ENCODE measurements at regions of chr4 and their contacts with region 1.

Region 1: GRCh38 chr4:128809477-128810330 is at the start of gene JADE1:
- DNase-seq: peak; percentile 82 to 83 (median 83)
- H3K4me3 ChIP-seq: peak within 1 kb of the TSS; percentile 63 to 99 (median 99)
- H3K4me3 Mint-ChIP-seq: peak within 1 kb of the TSS; percentile 97 to 99
- H3K27ac ChIP-seq: peak within 1 kb of the TSS; percentile 64 to 74
- H3K27ac Mint-ChIP-seq: peak within 1 kb of the TSS; percentile 82 to 97 (median 91)
- H3K4me1 ChIP-seq: peaks cover 19 to 31% of the 10 kb centered on the region in 2 donors
- H3K4me1 Mint-ChIP-seq: peaks cover 23% of the 10 kb centered on the region
- H3K27me3 ChIP-seq: no peaks in the 10 kb centered on the region
- H3K27me3 Mint-ChIP-seq: no peaks in the 10 kb centered on the region
- CTCF ChIP-seq: peak; percentile 55
- polyA plus RNA-seq, gene JADE1: 7.3 to 12.8 (median 12.3) TPM

Region 2: DNA sequence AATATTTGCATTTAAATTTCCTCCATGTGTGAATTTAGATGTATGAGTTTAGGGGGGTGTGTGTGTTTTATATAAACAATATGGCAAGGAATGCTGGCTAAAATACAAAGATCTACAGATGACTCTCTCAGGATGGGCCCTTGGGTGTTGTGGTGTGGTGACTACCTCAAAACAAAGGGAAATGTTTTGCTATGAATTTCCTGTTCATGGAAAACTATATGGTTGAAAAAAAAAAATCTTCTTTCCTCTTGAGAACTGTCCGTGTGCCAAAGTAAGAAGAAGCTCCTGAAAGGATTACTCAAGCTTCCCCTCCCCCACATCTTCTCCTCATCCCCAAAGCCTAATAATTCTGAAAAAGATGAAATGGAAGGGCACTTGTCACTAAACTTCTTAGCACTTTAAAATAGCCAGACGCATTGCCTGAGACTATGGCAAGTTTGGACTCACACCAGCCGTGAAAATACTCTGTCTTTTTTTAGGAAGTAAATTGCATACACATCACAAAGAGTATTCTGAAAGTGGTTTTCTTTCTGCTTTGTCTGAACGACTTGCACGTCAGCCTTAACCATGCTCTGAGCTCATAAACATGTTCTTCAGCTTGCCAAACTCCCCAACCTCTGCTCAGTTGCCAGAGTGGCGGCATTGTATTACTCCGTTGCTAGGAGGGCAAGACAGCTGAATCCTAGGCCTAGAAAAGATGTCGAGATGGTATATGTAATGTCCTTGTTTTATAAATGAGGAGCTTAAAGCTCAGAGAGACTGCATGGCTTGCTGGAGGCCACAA is 250.6 kb before region 1 on chr4:
- intact Hi-C with region 1: loop called in 1 of 2 experiments (anchors 10 kb)
- DNase-seq: no peak
- H3K4me3 ChIP-seq: no peak overlapping the region
- H3K4me3 Mint-ChIP-seq: peak overlapping the region in 1 of 2 donors; percentile 63
- H3K27ac ChIP-seq: no peak overlapping the region
- H3K27ac Mint-ChIP-seq: peak overlapping the region in 3 of 7 donors; percentile 0 to 34 (median 21)
- H3K4me1 ChIP-seq: peaks cover 18 to 20% of the 10 kb centered on the region in 2 donors
- H3K4me1 Mint-ChIP-seq: peaks cover 21% of the 10 kb centered on the region
- H3K27me3 ChIP-seq: no peaks in the 10 kb centered on the region
- H3K27me3 Mint-ChIP-seq: peaks cover 0 to 3% (median 3%) of the 10 kb centered on the region in 3 donors
- CTCF ChIP-seq: no peak

Region 3: GRCh38 chr4:128574706-128575105 is 235.0 kb before region 1 on chr4:
- intact Hi-C with region 1: no loop called
- DNase-seq: peak in 2 of 3 donors; percentile 27 to 44
- H3K4me3 ChIP-seq: no peak overlapping the region
- H3K4me3 Mint-ChIP-seq: no peak overlapping the region
- H3K27ac ChIP-seq: no peak overlapping the region
- H3K27ac Mint-ChIP-seq: no peak overlapping the region
- H3K4me1 ChIP-seq: peaks cover 21% of the 10 kb centered on the region in 2 donors
- H3K4me1 Mint-ChIP-seq: peaks cover 17% of the 10 kb centered on the region
- H3K27me3 ChIP-seq: no peaks in the 10 kb centered on the region
- H3K27me3 Mint-ChIP-seq: no peaks in the 10 kb centered on the region
- CTCF ChIP-seq: peak; percentile 54